ENCODE measurements at regions of chr12 and their contacts with region 1.

Region 1: DNA sequence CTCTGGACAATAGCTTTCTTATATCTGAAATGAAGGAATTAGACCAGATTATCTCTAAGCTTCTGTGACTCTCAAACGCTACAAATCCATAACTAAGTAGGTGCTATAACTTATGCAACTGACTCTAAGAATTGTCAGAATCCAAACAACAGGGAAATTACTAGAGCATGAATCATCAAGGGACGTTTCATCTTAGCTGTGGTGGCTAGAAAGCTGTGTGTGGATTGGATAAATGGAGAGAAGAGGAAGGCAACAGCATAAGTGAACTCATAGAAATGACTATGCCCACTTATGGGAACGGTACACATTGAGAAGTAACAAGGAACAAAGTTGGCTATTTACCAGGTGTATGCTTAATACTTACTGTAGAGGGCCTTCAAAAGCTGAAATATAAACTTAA is 96.0 kb upstream of the NEDD1 start:
- DNase-seq: peak; percentile 43
- H3K4me3 Mint-ChIP-seq: no peak overlapping the region
- H3K27ac Mint-ChIP-seq: peak overlapping the region; percentile 46
- H3K4me1 Mint-ChIP-seq: peaks cover 39% of the 10 kb centered on the region
- H3K27me3 Mint-ChIP-seq: no peaks in the 10 kb centered on the region
- CTCF ChIP-seq: no peak

Region 2: DNA sequence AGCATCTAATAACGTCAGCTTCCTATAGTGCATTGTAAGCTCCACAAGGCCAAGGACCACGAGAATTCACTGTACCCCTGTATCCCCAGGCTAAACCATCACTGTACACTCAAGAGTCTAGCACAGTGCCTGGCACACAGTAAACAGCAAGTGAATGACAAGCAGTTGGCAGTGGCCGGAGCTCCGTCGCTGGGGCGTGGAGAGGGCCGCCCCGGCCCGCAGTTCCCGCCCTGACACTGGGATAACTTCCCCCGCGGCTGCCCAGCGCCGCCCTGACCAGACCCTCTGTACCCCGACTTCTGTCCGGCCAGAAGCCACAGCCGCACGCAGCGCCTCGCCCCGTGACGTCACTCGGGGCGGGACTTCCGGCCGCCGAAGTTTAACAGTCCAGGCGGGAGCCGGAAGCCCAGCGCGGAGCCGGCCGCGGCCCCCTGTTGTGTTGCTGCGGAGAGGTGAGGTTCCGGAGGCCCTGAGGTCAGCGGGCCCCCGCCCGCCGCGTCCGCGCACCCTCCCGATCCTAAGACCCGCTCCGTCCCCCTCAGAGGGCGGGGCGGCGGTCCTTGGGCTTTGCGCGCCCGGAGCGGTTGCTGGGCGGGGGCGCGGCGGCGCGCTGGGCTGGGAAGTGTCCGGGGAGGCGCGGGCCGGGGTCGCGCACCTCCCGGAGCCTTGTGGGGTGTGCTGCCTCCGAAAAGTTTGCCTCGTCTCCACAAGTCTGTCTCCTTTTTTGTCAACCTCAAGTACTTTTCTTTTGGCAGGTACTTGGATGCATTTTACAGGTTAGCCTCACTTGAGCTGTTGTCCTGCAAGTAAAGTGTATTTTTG is 96.0 kb after region 1 on chr12 and contains the start of gene NEDD1:
- CTCF ChIA-PET with region 1: no interaction called
- intact Hi-C with region 1: loop called (anchors 2 kb)
- DNase-seq: peak; percentile 91
- H3K4me3 Mint-ChIP-seq: peak within 1 kb of the TSS; percentile 93
- H3K27ac Mint-ChIP-seq: peak within 1 kb of the TSS; percentile 92
- H3K4me1 Mint-ChIP-seq: peaks cover 37% of the 10 kb centered on the region
- H3K27me3 Mint-ChIP-seq: no peaks in the 10 kb centered on the region
- CTCF ChIP-seq: no peak
- total RNA-seq, gene NEDD1: 47.5 and 49.0 TPM in 2 replicates